MCF 10A (cell line): ENCODE measurements at regions of chr17 and their contacts with region 1.

Region 1: GRCh38 chr17:74457146-74457819 is 9.2 kb upstream of the CD300A start:
- DNase-seq: peak; percentile 69
- H3K4me3 Mint-ChIP-seq: no peak overlapping the region
- H3K27ac Mint-ChIP-seq: no peak overlapping the region
- H3K4me1 Mint-ChIP-seq: peaks cover 7% of the 10 kb centered on the region
- H3K27me3 Mint-ChIP-seq: no peaks in the 10 kb centered on the region
- CTCF ChIP-seq: peak; percentile 92

Region 2: DNA sequence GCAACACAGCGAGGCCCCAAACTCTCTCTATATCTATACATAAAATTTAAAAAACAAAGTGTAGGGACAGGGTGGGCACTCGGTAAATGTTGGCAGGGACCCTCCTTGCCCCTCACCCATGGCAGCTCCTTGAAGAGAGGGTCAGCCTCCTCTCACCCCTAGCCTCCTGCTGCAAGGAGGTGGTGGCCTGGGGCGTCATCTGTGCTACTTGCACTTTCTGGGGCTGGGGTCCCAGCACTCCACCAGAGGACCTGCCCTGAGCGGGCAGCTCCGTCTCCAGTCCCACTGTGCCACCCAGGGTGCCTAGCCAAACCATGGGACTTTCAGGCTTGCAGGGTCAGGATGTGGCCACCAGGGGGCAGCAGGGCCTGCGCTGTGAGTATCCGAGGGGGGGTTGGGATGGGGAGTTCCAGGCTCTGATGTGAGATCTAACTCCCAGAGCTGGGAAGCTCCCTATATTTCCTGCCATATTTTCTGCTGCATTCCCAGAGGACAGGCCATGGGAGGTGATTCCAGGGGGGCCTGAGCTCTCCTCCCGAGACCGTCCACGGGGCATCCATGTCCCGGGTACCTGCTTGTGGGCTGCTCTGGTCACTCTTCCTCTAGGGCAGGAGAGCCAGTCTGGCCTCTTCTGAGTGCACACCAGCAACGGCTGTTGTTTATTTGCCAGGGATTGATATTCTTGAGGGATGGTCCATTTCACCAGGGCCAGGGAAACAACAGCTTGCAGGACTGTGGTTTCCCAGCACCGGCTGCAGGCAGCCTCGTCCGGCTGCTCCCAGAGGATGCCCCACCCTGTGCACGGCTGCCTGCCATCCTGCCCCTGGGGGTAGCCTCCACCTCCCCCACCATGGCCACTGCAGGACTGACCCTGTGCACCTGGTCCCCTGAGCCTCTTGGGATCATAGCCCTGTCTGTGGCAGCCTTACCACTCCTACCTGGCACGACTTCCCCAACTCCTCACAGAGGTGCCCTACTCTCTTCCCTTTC is 88.9 kb before region 1 on chr17:
- CTCF ChIA-PET with region 1: interaction called, 283 read pairs
- POLR2A ChIA-PET with region 1: no interaction called
- intact Hi-C with region 1: loop called (anchors 1 kb)
- DNase-seq: peak; percentile 74
- H3K4me3 Mint-ChIP-seq: no peak overlapping the region
- H3K27ac Mint-ChIP-seq: no peak overlapping the region
- H3K4me1 Mint-ChIP-seq: no peaks in the 10 kb centered on the region
- H3K27me3 Mint-ChIP-seq: peaks cover 27% of the 10 kb centered on the region
- CTCF ChIP-seq: peak; percentile 79

Region 3: GRCh38 chr17:74417178-74418045 is 39.9 kb before region 1 on chr17:
- CTCF ChIA-PET with region 1: interaction called, 14 read pairs
- POLR2A ChIA-PET with region 1: interaction called, 8 read pairs
- intact Hi-C with region 1: no loop called
- DNase-seq: peak; percentile 87
- H3K4me3 Mint-ChIP-seq: no peak overlapping the region
- H3K27ac Mint-ChIP-seq: no peak overlapping the region
- H3K4me1 Mint-ChIP-seq: peaks cover 5% of the 10 kb centered on the region
- H3K27me3 Mint-ChIP-seq: no peaks in the 10 kb centered on the region
- CTCF ChIP-seq: no peak

Region 4: GRCh38 chr17:74437702-74438101 is 19.6 kb before region 1 on chr17:
- CTCF ChIA-PET with region 1: interaction called, 49 read pairs
- POLR2A ChIA-PET with region 1: interaction called, 28 read pairs
- intact Hi-C with region 1: no loop called
- DNase-seq: no peak
- H3K4me3 Mint-ChIP-seq: no peak overlapping the region
- H3K27ac Mint-ChIP-seq: no peak overlapping the region
- H3K4me1 Mint-ChIP-seq: peaks cover 17% of the 10 kb centered on the region
- H3K27me3 Mint-ChIP-seq: no peaks in the 10 kb centered on the region
- CTCF ChIP-seq: peak; percentile 78

Region 5: GRCh38 chr17:74493381-74493833 is 36.1 kb after region 1 on chr17:
- CTCF ChIA-PET with region 1: interaction called, 5 read pairs
- POLR2A ChIA-PET with region 1: no interaction called
- intact Hi-C with region 1: loop called (anchors 1 kb)
- DNase-seq: peak; percentile 70
- H3K4me3 Mint-ChIP-seq: no peak overlapping the region
- H3K27ac Mint-ChIP-seq: no peak overlapping the region
- H3K4me1 Mint-ChIP-seq: no peaks in the 10 kb centered on the region
- H3K27me3 Mint-ChIP-seq: peaks cover 28% of the 10 kb centered on the region
- CTCF ChIP-seq: peak; percentile 82